Activated naive CD4-positive, alpha-beta T cell treated with anti-CD3 and anti-CD28 coated beads for 36 hours (primary cell): ENCODE measurements at regions of chr13 and their contacts with region 1.

Region 1: DNA sequence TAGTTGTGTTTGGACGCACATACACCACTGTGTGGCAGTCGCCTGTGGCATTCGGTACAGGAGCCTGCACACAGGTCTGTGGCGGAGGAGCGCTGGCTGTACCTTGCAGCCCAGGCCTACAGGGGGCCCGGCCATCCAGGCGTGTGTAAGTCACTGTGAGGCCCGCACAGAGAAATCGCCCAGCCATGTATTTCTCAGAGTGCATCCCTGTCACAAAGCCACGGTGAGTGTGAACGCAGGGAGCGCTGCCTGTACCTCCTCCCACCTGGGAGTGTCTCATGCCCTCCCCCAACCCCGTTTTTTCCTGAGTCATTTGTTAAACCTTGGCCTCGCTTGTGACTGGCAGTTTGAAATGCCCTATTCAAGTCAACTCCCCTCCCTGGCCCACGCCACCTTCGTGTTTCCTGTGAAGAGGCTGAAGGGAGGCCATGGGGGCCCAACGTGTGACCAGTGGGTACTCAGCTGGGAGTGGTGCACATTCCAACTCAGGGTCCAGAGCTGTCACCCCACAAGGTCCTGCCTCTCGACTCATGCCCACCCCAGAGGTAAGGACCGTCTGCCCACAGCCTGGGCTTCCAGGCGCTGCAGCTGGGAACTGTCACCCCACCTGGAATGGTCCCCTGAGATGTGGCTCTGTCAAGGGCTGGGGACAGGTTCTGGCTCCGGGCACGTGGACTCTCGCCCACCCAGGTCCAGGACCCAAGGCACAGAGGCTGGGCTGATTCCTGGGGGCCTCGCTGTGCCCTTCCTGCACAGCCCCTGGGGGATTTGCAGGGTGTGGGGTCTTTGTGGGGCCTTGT is 11.6 kb upstream of the RASA3 start:
- DNase-seq: peak; percentile 70
- H3K4me3 Mint-ChIP-seq: no peak overlapping the region
- H3K27ac Mint-ChIP-seq: peak overlapping the region; percentile 54
- H3K4me1 Mint-ChIP-seq: peaks cover 40% of the 10 kb centered on the region
- H3K27me3 Mint-ChIP-seq: no peaks in the 10 kb centered on the region

Region 2: GRCh38 chr13:114110091-114110829 is 33.7 kb before region 1 on chr13:
- CTCF ChIA-PET with region 1: interaction called, 5 read pairs
- intact Hi-C with region 1: loop called (anchors 5 kb)
- DNase-seq: peak; percentile 88
- H3K4me3 Mint-ChIP-seq: peak overlapping the region; percentile 82
- H3K27ac Mint-ChIP-seq: peak overlapping the region; percentile 90
- H3K4me1 Mint-ChIP-seq: peaks cover 83% of the 10 kb centered on the region
- H3K27me3 Mint-ChIP-seq: no peaks in the 10 kb centered on the region

Region 3: DNA sequence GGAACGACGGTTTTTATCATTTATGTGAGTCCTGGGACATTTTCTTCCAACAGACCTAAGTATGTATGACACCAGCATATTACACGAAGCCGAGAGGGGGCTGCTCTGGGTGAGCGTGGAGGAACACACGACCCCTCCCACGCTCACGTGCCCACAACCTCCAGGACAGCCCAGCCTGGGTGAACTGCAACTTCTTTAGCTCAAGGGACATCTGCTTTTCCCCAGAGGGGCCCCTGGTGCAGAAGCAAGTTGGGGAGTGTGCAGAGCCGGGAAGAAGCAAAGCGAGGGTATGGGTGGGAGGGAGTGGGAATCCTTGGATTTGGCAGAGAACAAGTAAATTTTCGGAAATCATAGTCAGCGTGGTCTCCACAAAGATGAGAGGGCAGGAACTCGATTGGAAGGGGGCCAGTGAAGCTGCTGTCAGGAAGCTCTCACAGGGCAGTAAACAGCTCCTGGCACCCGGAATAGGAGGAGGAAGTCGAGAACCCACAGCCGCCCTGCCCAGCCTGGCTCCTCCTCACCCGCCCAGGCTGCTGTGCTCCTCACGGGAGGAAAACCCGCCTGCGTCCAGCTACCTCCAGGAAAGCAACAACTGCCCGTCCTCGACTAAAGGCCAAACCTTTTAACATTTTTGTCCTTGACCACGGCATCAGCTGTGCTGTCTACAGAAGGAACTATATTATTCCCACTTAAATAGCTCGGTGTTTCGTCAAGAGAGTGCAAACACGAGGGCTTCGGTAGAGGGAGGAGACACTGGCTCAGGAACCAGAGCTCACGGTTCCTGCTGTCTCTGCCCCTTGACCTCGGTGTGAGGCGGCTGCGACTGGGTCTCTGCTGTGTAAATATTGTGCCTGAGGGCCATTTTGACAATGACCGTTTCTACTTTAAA is 17.9 kb after region 1 on chr13:
- CTCF ChIA-PET with region 1: interaction called, 13 read pairs
- intact Hi-C with region 1: no loop called
- DNase-seq: peak; percentile 72
- H3K4me3 Mint-ChIP-seq: peak overlapping the region; percentile 65
- H3K27ac Mint-ChIP-seq: peak overlapping the region; percentile 77
- H3K4me1 Mint-ChIP-seq: peaks cover 69% of the 10 kb centered on the region
- H3K27me3 Mint-ChIP-seq: no peaks in the 10 kb centered on the region